ENCODE measurements at regions of chr2 and their contacts with region 1.

Region 1: GRCh38 chr2:97774425-97774824 is 61.0 kb downstream of the ZAP70 start:
- DNase-seq: no peak
- H3K4me3 ChIP-seq: no peak overlapping the region
- H3K27ac ChIP-seq: no peak overlapping the region
- H3K4me1 ChIP-seq: peaks cover 0 to 11% (median 0%) of the 10 kb centered on the region in 4 experiments; a peak in 2 of 7 replicates
- H3K27me3 ChIP-seq: no peaks in the 10 kb centered on the region
- CTCF ChIP-seq: peak; percentile 51 to 80 (median 69)
- EP300 ChIP-seq: no peak
- POLR2A ChIP-seq: no peak
- RAD21 ChIP-seq: peak; percentile 52 to 61; a peak in 3 of 4 replicates

Region 2: GRCh38 chr2:97751752-97752151 is 22.7 kb before region 1 on chr2:
- CTCF ChIA-PET with region 1: interaction called, 11 read pairs
- POLR2A ChIA-PET with region 1: no interaction called
- DNase-seq: no peak
- H3K4me3 ChIP-seq: no peak overlapping the region; a peak in 1 of 8 replicates
- H3K27ac ChIP-seq: no peak overlapping the region
- H3K4me1 ChIP-seq: peaks cover 0 to 10% (median 3%) of the 10 kb centered on the region in 4 experiments; a peak in 4 of 7 replicates
- H3K27me3 ChIP-seq: no peaks in the 10 kb centered on the region
- CTCF ChIP-seq: no peak
- EP300 ChIP-seq: no peak
- POLR2A ChIP-seq: no peak
- RAD21 ChIP-seq: no peak

Region 3: GRCh38 chr2:97761192-97761591 is 13.2 kb before region 1 on chr2:
- CTCF ChIA-PET with region 1: interaction called, 60 read pairs
- POLR2A ChIA-PET with region 1: no interaction called
- DNase-seq: no peak
- H3K4me3 ChIP-seq: no peak overlapping the region
- H3K27ac ChIP-seq: no peak overlapping the region
- H3K4me1 ChIP-seq: no peaks in the 10 kb centered on the region; a peak in 1 of 7 replicates
- H3K27me3 ChIP-seq: no peaks in the 10 kb centered on the region; a peak in 1 of 7 replicates
- CTCF ChIP-seq: no peak
- EP300 ChIP-seq: no peak
- POLR2A ChIP-seq: no peak
- RAD21 ChIP-seq: no peak

Region 4: DNA sequence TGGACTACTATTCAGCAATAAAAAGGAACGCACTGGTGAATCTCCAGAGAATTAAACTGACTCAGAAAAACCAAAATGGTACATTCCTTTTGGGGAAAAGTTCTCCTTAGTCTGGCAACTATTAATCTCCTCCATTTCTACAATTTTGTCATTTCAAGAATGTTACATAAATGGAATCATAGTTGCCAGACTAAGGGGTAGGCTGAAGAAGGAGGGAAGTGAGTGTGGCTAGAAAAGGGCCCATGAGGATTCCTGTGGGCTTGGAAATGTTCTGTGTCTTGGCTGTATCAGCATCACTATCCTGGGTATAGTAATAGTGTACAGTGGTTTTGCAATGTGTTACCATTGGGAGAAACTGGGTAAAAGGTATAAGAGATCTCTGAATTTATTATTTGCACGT is 11.4 kb after region 1 on chr2:
- CTCF ChIA-PET with region 1: interaction called, 17 read pairs
- POLR2A ChIA-PET with region 1: no interaction called
- DNase-seq: no peak
- H3K4me3 ChIP-seq: no peak overlapping the region
- H3K27ac ChIP-seq: no peak overlapping the region
- H3K4me1 ChIP-seq: no peaks in the 10 kb centered on the region; a peak in 1 of 7 replicates
- H3K27me3 ChIP-seq: no peaks in the 10 kb centered on the region; a peak in 2 of 7 replicates
- CTCF ChIP-seq: no peak
- EP300 ChIP-seq: no peak
- POLR2A ChIP-seq: no peak
- RAD21 ChIP-seq: no peak